MCF 10A (cell line): ENCODE measurements at regions of chr12 and their contacts with region 1.

Region 1: DNA sequence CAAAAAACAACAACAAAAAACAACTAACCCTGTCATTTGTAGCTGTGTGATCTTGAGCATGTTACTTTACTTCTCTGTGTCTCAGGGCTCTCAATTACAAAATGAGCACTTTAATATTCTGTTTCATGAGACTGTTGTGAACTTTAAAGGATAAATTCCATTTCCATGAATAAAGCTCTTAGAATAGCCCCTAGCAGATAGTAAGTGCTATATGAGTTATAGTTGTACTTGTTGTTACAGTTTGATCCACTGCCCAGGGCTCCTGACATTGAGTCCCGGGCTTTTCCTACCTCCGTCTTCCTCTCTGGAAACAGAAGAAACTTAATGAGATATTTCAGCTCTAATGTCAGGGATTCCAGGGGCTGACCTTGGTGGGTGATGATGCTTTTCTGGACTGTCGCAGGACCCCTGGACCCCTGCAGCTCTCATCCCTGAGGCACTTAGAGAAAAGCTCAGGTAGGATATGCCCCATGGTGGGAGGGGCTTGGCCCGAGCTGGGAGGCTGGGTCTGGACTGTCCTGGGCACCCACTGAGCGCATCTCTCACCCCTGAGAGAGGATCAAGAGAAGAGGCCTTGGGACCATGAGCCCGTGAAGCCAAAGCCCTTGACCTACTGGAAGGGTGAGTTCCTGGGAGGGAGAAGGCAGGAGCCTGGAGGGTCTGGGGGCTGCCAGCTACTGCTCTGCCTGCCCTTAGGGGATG is 5.1 kb downstream of the P3H3 start:
- DNase-seq: no peak
- H3K4me3 Mint-ChIP-seq: no peak overlapping the region
- H3K27ac Mint-ChIP-seq: no peak overlapping the region
- H3K4me1 Mint-ChIP-seq: peaks cover 7% of the 10 kb centered on the region
- H3K27me3 Mint-ChIP-seq: peaks cover 37% of the 10 kb centered on the region
- CTCF ChIP-seq: no peak

Region 2: DNA sequence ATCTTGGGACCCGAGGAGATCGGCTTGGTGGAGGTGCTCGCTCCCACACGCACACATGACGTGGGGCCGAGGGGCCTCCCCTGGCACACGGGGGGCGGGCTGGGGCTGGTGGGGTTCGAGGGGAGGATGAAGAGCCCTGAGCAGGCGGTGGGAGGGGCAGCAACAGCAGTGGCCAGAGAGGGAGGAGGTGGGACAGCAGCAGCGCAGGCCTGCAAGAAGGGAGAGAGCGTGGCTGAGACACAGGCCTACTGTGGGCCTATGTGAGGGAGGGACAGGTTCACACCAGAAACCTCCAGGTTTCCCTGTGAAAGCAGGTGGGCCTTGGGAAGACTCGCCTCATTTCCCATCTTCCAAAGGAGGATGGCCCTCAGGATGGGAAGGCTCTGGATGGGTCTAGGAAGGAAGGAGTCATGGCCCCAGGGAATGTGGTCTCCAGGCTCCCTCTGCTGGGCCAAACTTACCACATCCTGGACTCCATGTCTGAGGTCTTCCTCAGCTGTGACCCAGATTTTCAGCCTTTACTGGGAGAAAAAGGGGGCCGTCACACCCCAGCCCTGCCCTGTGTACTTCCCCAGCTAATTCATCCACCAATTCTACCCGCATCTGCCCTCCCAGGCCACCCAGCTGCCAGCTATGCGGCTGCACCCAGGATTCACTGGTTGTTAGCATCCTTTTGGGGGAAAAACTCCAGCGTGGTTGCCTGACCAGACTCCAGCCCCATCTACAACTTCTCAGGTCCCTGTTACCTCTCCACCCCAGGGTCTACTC is 135.6 kb before region 1 on chr12:
- CTCF ChIA-PET with region 1: no interaction called
- POLR2A ChIA-PET with region 1: no interaction called
- intact Hi-C with region 1: no loop called
- DNase-seq: peak; percentile 73
- H3K4me3 Mint-ChIP-seq: no peak overlapping the region
- H3K27ac Mint-ChIP-seq: no peak overlapping the region
- H3K4me1 Mint-ChIP-seq: peaks cover 8% of the 10 kb centered on the region
- H3K27me3 Mint-ChIP-seq: peaks cover 60% of the 10 kb centered on the region
- CTCF ChIP-seq: peak; percentile 66

Region 3: GRCh38 chr12:6735448-6736191 is 97.7 kb before region 1 on chr12:
- CTCF ChIA-PET with region 1: interaction called, 19 read pairs
- POLR2A ChIA-PET with region 1: interaction called, 3 read pairs
- intact Hi-C with region 1: no loop called
- DNase-seq: peak; percentile 85
- H3K4me3 Mint-ChIP-seq: peak overlapping the region; percentile 34
- H3K27ac Mint-ChIP-seq: peak overlapping the region; percentile 14
- H3K4me1 Mint-ChIP-seq: peaks cover 9% of the 10 kb centered on the region
- H3K27me3 Mint-ChIP-seq: no peaks in the 10 kb centered on the region
- CTCF ChIP-seq: peak; percentile 57

Region 4: DNA sequence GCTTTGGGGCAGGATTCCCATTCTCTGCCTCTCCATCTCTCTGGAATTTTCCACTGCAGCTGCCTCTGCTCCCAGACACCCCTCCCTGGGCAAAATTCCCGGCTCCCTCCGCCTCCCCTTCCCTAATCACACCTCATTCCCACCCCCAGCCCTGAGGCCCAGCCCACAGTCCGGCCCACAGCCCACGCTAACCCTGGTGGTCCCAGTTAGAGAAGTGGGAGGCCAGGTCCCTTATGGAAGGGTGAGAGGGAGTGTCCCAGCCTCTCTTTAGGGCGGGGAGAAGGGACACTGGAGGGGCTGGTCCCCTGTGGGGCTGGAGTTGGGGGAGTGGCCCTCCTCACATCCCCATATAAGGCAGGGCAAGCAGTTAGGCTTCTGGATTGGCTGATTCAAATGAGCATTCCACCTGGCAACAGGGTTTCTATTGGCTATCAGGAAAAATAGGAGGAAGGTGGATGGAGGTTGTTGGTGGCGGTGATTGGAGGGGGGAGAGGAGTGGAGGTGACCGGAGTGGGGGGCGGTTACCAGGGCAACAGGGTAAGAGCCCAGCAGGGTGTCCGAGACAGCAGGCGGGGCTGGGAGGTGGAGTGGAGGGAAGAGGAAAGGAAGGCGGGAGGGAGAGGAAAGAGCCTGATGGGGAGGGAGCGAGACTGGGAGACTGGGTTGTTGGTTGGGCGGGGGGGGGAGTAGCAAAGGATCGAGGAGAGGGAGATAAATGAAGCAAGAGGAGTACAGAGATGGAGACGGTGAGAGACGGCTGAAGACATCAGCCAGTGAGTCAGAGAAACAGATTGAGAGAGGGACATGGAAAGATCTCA is 69.1 kb before region 1 on chr12:
- CTCF ChIA-PET with region 1: interaction called, 12 read pairs
- POLR2A ChIA-PET with region 1: interaction called, 4 read pairs
- intact Hi-C with region 1: no loop called
- DNase-seq: peak; percentile 99
- H3K4me3 Mint-ChIP-seq: peak overlapping the region; percentile 84
- H3K27ac Mint-ChIP-seq: peak overlapping the region; percentile 95
- H3K4me1 Mint-ChIP-seq: peaks cover 42% of the 10 kb centered on the region
- H3K27me3 Mint-ChIP-seq: no peaks in the 10 kb centered on the region
- CTCF ChIP-seq: no peak